ENCODE measurements at regions of chr22 and their contacts with region 1.

Region 1: DNA sequence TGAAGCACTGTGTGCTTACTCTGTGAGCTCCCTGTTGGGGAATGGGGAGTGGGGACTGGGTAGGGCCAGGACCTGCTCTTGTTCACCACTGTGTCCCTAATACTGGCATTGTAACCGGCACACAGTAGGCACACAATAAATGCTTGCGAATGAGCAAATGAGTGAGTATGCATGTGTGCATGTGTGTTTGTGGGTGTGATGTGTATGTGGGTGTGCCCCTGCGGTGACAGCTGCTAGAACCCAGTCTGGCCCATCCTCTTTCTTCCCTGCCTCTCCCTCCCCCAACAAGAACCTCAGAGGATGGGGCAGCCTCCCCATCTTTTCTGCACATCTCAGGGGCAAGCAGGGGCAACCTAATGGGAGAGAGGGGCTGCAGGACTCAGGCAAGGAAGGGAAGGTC is 90.5 kb downstream of the MN1 start:
- DNase-seq: no peak
- ATAC-seq: no peak

Region 2: GRCh38 chr22:27687984-27688545 is 22.9 kb before region 1 on chr22:
- intact Hi-C with region 1: loop called (anchors 1 kb)
- DNase-seq: no peak
- ATAC-seq: no peak

Region 3: DNA sequence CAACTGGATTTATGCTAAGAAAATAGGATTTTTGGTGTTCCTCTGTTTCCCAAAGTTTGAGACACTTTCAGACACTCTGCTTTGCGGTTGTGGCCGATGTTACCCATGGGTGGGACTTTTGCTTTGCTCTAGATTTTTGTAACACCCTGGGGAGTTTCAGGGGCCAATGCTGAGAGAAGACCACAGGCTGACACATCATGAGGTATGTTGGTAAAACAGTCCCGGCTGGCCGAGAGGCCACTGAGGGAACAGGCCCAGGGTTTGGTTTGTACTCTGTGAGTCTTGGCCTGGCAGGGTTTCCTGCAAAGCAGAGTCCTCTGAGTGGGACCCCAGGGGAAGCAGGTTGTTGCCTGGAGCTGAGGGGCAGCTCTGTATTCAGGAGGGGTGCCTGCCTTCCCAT is 286.5 kb after region 1 on chr22:
- intact Hi-C with region 1: no loop called
- DNase-seq: no peak
- ATAC-seq: no peak

Measured in sciatic nerve (tissue), 2 donors.